ENCODE measurements at regions of chr16 and their contacts with region 1.

Region 1: GRCh38 chr16:79439901-79440300 is 160.6 kb downstream of the MAF start:
- DNase-seq: no peak
- ATAC-seq: no peak
- H3K4me3 ChIP-seq: no peak overlapping the region
- H3K4me3 Mint-ChIP-seq: no peak overlapping the region
- H3K27ac ChIP-seq: no peak overlapping the region
- H3K27ac Mint-ChIP-seq: no peak overlapping the region
- H3K4me1 ChIP-seq: no peaks in the 10 kb centered on the region
- H3K4me1 Mint-ChIP-seq: no peaks in the 10 kb centered on the region
- H3K27me3 ChIP-seq: no peaks in the 10 kb centered on the region
- H3K27me3 Mint-ChIP-seq: peaks cover 4% of the 10 kb centered on the region
- CTCF ChIP-seq: no peak

Region 2: GRCh38 chr16:79469999-79470398 is 30.1 kb after region 1 on chr16:
- CTCF ChIA-PET with region 1: no interaction called
- POLR2A ChIA-PET with region 1: no interaction called
- intact Hi-C with region 1: no loop called
- DNase-seq: no peak
- ATAC-seq: no peak
- H3K4me3 ChIP-seq: no peak overlapping the region
- H3K4me3 Mint-ChIP-seq: no peak overlapping the region
- H3K27ac ChIP-seq: no peak overlapping the region
- H3K27ac Mint-ChIP-seq: no peak overlapping the region
- H3K4me1 ChIP-seq: no peaks in the 10 kb centered on the region
- H3K4me1 Mint-ChIP-seq: no peaks in the 10 kb centered on the region
- H3K27me3 ChIP-seq: no peaks in the 10 kb centered on the region
- H3K27me3 Mint-ChIP-seq: no peaks in the 10 kb centered on the region
- CTCF ChIP-seq: no peak

Region 3: GRCh38 chr16:79482011-79482410 is 42.1 kb after region 1 on chr16:
- CTCF ChIA-PET with region 1: no interaction called
- POLR2A ChIA-PET with region 1: no interaction called
- intact Hi-C with region 1: no loop called
- DNase-seq: no peak
- ATAC-seq: no peak
- H3K4me3 ChIP-seq: no peak overlapping the region
- H3K4me3 Mint-ChIP-seq: no peak overlapping the region
- H3K27ac ChIP-seq: no peak overlapping the region
- H3K27ac Mint-ChIP-seq: no peak overlapping the region
- H3K4me1 ChIP-seq: no peaks in the 10 kb centered on the region
- H3K4me1 Mint-ChIP-seq: no peaks in the 10 kb centered on the region
- H3K27me3 ChIP-seq: peaks cover 0 to 3% of the 10 kb centered on the region in 2 experiments
- H3K27me3 Mint-ChIP-seq: peaks cover 9% of the 10 kb centered on the region
- CTCF ChIP-seq: no peak

Region 4: DNA sequence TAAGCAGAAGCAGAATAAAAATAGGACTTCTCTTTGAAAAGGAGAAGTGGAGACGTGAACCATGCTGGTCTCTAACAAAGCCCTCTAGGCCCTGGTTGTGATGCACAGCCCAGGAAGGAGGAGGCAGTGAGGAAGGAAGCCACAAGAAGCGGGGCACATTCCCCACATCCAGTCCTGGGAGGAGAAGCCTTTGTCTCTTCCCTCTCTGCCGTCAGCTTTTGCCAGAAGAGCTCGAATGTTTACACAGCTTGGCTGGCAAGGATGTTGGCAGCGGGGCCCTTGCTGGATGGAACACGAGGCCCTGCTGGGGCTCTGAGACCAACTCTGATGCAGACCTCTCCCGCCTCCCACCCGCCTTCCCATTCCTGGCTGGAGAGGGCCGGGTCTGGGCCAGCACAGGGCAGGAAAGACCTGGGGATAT is 69.3 kb after region 1 on chr16:
- CTCF ChIA-PET with region 1: no interaction called
- POLR2A ChIA-PET with region 1: no interaction called
- intact Hi-C with region 1: loop called in 1 of 2 experiments (anchors 10 kb)
- DNase-seq: no peak
- ATAC-seq: no peak
- H3K4me3 ChIP-seq: no peak overlapping the region
- H3K4me3 Mint-ChIP-seq: no peak overlapping the region
- H3K27ac ChIP-seq: no peak overlapping the region
- H3K27ac Mint-ChIP-seq: no peak overlapping the region
- H3K4me1 ChIP-seq: no peaks in the 10 kb centered on the region
- H3K4me1 Mint-ChIP-seq: no peaks in the 10 kb centered on the region
- H3K27me3 ChIP-seq: no peaks in the 10 kb centered on the region
- H3K27me3 Mint-ChIP-seq: peaks cover 10% of the 10 kb centered on the region
- CTCF ChIP-seq: no peak